Activated CD4-positive, alpha-beta T cell treated with anti-CD3 and anti-CD28 coated beads, Interleukin-2, amount 10 ng/mL, durations not matched to agents 24 days and 14 days (primary cell): ENCODE measurements at regions of chr4 and their contacts with region 1.

Region 1: DNA sequence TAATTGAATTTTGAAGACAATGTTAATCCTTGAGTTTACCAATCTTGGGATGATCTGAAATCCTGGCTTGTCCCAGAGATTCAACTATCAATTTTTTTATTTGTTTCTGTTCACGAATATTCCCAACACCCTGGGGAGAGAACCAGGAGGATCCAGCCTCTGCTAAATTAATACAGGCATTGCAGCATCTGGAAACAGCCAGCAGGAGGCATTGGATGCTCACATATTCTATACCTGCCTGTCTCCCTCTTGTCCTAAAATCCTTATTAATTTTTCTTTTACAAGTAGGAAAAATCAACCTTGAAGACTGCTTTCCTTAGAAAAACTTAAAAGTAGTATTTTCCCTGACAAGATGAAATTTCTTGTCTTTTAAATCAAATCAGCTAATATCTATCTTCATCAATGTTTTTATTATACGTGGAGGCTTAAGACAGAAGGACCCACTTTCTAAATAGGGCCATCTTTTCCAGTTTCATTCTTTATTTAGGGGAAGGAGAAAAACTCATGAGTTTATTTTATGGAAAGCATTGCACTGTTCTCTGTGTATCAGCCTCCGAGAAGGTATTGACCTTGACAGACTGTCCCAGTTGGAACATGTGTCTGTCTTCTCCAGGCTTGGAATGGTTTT is 102.4 kb downstream of the CLNK start:
- DNase-seq: peak; percentile 69
- H3K4me3 Mint-ChIP-seq: no peak overlapping the region
- H3K27ac Mint-ChIP-seq: no peak overlapping the region
- H3K4me1 Mint-ChIP-seq: peaks cover 14% of the 10 kb centered on the region
- H3K27me3 Mint-ChIP-seq: no peaks in the 10 kb centered on the region

Region 2: DNA sequence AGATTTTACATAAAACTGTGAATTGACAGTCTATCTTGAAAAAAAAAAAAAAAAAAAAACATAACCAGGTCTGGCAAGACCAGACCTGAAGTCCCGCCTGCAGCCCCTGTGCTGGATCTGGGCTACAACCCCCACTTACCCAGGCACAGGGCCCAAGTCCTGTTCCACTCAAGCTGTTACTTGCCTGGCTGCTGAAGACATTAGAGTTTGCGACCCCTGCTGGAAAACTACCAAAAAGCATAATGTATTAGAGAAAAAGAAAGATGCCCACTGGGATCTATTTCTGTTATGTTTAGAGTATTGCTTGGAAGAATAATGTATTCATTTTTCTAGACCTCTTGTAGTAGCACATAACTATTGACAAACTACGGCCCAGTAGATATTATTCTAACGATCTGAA is 841.8 kb after region 1 on chr4:
- intact Hi-C with region 1: loop called (anchors 1 kb)
- DNase-seq: peak; percentile 71
- H3K4me3 Mint-ChIP-seq: no peak overlapping the region
- H3K27ac Mint-ChIP-seq: no peak overlapping the region
- H3K4me1 Mint-ChIP-seq: peaks cover 5% of the 10 kb centered on the region
- H3K27me3 Mint-ChIP-seq: peaks cover 23% of the 10 kb centered on the region

Region 3: GRCh38 chr4:11471618-11472017 is 889.4 kb after region 1 on chr4:
- intact Hi-C with region 1: loop called (anchors 5 kb)
- DNase-seq: peak; percentile 87
- H3K4me3 Mint-ChIP-seq: peak overlapping the region; percentile 68
- H3K27ac Mint-ChIP-seq: peak overlapping the region; percentile 92
- H3K4me1 Mint-ChIP-seq: peaks cover 36% of the 10 kb centered on the region
- H3K27me3 Mint-ChIP-seq: peaks cover 2% of the 10 kb centered on the region